A673 (cell line): ENCODE measurements at regions of chrX and their contacts with region 1.

Region 1: GRCh38 chrX:51860679-51861078 is 32.7 kb upstream of the MAGED1 start:
- DNase-seq: peak; percentile 55
- H3K4me3 ChIP-seq: no peak overlapping the region
- H3K27ac ChIP-seq: no peak overlapping the region
- H3K4me1 ChIP-seq: no peaks in the 10 kb centered on the region
- H3K27me3 ChIP-seq: no peaks in the 10 kb centered on the region
- CTCF ChIP-seq: peak; percentile 64

Region 2: GRCh38 chrX:51487960-51488267 is 372.8 kb before region 1 on chrX:
- CTCF ChIA-PET with region 1: interaction called, 6 read pairs
- POLR2A ChIA-PET with region 1: no interaction called
- intact Hi-C with region 1: loop called (anchors 2 kb)
- DNase-seq: no peak
- H3K4me3 ChIP-seq: no peak overlapping the region
- H3K27ac ChIP-seq: peak overlapping the region; percentile 49
- H3K4me1 ChIP-seq: no peaks in the 10 kb centered on the region
- H3K27me3 ChIP-seq: no peaks in the 10 kb centered on the region
- CTCF ChIP-seq: no peak

Region 3: GRCh38 chrX:51614353-51615012 is 246.2 kb before region 1 on chrX:
- CTCF ChIA-PET with region 1: interaction called, 3 read pairs
- POLR2A ChIA-PET with region 1: no interaction called
- intact Hi-C with region 1: loop called (anchors 1 kb)
- DNase-seq: peak; percentile 78
- H3K4me3 ChIP-seq: no peak overlapping the region
- H3K27ac ChIP-seq: no peak overlapping the region
- H3K4me1 ChIP-seq: no peaks in the 10 kb centered on the region
- H3K27me3 ChIP-seq: no peaks in the 10 kb centered on the region
- CTCF ChIP-seq: peak; percentile 83

Region 4: DNA sequence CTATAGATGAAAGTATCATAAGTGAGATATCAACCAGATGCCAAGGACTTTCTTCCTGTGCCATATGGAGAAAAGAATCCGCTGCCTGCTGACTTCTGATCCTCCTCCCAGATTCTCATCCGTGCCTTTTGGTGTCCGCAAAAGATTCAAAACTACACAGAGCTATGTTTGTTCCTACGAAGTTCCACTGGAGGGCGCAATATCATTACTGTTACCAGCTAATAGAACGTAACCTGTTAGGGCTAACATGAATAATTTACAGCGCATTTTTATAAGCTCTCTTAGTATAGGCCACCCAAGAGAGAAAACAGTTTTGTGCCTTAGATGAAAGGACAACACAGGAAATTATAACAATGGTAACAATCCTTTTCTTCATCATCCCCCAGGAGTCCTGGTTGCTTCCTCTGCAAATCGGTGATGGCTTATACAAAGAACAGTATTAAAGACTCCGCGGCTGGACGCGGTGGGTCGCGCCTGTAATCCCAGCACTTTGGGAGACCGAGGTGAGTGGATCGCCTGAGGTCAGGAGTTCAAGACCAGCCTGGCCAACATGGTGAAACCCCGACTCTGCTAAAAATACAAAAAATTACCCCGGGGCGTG is 219.2 kb before region 1 on chrX:
- CTCF ChIA-PET with region 1: interaction called, 17 read pairs
- POLR2A ChIA-PET with region 1: no interaction called
- intact Hi-C with region 1: loop called (anchors 2 kb)
- DNase-seq: peak; percentile 81
- H3K4me3 ChIP-seq: no peak overlapping the region
- H3K27ac ChIP-seq: no peak overlapping the region
- H3K4me1 ChIP-seq: no peaks in the 10 kb centered on the region
- H3K27me3 ChIP-seq: no peaks in the 10 kb centered on the region
- CTCF ChIP-seq: peak; percentile 77

Region 5: GRCh38 chrX:52437212-52437740 is 576.6 kb after region 1 on chrX:
- CTCF ChIA-PET with region 1: no interaction called
- POLR2A ChIA-PET with region 1: no interaction called
- intact Hi-C with region 1: no loop called
- DNase-seq: no peak
- H3K4me3 ChIP-seq: no peak overlapping the region
- H3K27ac ChIP-seq: no peak overlapping the region
- H3K4me1 ChIP-seq: no peaks in the 10 kb centered on the region
- H3K27me3 ChIP-seq: no peaks in the 10 kb centered on the region
- CTCF ChIP-seq: no peak